Right cardiac atrium (tissue), 5 donors: ENCODE measurements at regions of chr2 and their contacts with region 1.

Region 1: GRCh38 chr2:99166218-99166617 is 11.5 kb downstream of the LIPT1 start:
- DNase-seq: no peak
- ATAC-seq: no peak
- H3K4me3 ChIP-seq: no peak overlapping the region
- H3K27ac ChIP-seq: no peak overlapping the region
- H3K4me1 ChIP-seq: no peaks in the 10 kb centered on the region
- H3K27me3 ChIP-seq: no peaks in the 10 kb centered on the region

Region 2: DNA sequence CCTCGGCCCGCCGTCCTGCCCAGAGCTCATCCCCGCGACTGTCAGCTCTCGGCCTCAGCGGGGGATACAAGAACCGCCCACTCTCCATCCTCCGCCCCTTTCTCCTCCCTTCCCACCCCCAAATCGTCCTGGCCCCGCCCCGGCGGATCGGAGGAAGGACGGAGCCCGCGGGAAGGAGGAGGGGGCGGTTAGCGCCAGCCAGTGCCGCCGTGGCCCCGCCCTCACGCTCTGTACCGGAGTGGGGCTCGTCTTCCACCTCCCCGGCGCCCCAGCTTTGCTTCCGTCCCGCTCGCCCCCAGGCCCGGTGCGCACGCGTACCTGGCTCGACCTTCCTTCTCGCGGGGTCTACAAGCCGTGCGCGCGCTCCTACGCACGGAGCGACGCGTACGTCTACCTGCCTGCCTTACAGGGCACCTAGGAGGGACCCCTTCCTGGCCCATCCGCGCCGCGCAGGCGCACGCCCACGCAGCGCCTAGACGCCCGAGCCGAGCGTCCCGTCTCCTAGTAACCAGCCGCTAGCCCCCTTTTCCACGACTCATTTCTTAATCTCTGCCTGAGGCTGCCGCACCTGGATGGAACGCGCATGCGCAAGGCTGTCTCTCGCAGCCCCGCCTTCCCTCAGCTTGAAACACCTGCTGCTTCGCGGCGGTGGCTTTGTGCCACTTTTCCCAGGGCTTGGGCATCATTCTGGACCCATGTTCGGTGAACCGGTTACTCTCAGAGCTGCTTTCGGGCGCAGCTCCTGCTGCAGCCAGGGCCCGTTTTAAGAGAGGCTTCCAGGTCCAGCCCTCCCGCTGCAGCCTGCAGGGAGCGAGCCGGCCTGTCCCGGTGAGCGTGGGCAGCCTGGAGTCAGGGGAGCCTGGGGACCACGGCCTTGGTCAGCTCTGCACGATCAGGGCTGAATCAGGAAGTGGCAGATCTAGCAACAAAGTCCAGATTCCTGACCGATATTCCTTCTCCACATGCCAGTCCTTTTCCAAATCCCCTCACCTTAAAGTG is 24.8 kb before region 1 on chr2 and contains the start of gene C2orf15:
- intact Hi-C with region 1: loop called in 1 of 4 experiments (anchors 2 kb)
- DNase-seq: peak; percentile 93 to 97 (median 97)
- ATAC-seq: peak; percentile 99
- H3K4me3 ChIP-seq: peak within 1 kb of the TSS; percentile 72
- H3K27ac ChIP-seq: peak within 1 kb of the TSS; percentile 58
- H3K4me1 ChIP-seq: no peaks in the 10 kb centered on the region
- H3K27me3 ChIP-seq: no peaks in the 10 kb centered on the region
- total RNA-seq, gene C2orf15: 0.18 to 0.43 TPM in 2 of 4 donors, not detected in the others

Region 3: DNA sequence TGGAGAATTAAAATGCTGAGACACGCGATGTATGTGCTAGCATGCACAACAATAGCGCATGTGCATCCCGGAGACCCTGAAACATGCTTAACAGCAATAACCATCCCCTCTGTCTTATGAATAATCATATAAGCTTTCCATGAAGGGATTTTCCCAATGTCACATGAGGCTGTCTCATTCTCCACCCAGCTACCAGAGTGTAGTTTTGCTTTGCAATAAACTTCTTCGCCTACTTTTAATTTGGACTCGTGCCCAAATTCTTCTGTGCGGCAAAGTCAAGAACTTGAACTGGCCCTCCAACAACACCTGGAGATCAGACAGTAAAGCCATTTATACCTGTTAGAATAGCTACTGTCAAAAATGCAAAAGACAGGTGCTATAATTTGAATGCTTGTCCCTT is 119.3 kb after region 1 on chr2:
- intact Hi-C with region 1: no loop called
- DNase-seq: no peak
- ATAC-seq: no peak
- H3K4me3 ChIP-seq: no peak overlapping the region
- H3K27ac ChIP-seq: no peak overlapping the region
- H3K4me1 ChIP-seq: no peaks in the 10 kb centered on the region
- H3K27me3 ChIP-seq: no peaks in the 10 kb centered on the region